H1 (cell line): ENCODE measurements at regions of chr4 and their contacts with region 1.

Region 1: GRCh38 chr4:2948895-2949765 is 14.1 kb downstream of the NOP14 start:
- DNase-seq: no peak
- H3K4me3 ChIP-seq: no peak overlapping the region
- H3K27ac ChIP-seq: no peak overlapping the region
- H3K4me1 ChIP-seq: no peaks in the 10 kb centered on the region
- H3K27me3 ChIP-seq: no peaks in the 10 kb centered on the region
- CTCF ChIP-seq: peak in 2 of 3 experiments; percentile 45 to 59; a peak in 3 of 4 replicates
- EP300 ChIP-seq: no peak
- POLR2A ChIP-seq: no peak
- RAD21 ChIP-seq: peak in 1 of 2 experiments; percentile 9; a peak in 1 of 4 replicates

Region 2: DNA sequence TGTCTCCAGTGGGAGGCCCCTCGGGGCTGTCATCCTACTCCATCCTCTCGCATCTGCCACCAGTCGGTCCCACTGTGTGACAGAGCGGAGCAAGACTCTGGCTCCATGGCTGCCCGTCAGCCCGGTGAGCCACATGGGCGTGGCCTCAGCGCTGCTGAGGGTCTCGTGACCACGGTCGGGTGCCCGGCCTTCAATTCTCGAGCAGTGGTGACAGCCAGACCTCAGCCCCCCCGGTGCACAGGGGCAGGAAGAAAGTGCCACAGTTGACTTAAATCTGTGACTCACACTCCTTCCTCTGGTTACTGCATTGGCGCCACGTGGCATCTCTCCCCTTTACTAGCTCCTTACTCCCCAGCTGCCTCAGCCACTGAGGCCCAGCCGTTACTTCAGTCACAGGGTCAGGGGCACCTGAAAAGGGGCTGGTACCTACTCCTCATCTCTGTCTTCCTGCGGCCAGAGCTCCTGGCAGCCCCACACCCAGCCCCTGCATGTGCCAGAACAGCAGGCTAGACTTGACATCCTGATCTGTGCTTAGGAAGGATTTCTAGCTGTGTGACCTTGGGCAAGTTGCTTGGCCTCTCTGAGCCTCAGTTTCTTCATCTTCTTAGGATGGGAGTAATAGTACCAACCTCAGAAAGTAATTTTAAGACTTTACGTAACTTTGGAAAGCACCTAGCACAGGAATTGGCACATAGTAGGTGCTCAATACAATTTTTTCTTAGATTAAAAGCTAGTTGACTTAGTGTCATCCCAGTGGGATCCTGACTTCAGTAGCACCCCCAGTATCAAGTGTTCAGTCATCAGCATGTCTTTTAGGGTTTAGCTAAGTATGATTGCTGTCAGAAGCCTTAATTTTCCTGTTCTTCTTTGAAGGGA is 259.1 kb before region 1 on chr4:
- CTCF ChIA-PET with region 1: no interaction called
- POLR2A ChIA-PET with region 1: no interaction called
- DNase-seq: no peak
- H3K4me3 ChIP-seq: no peak overlapping the region
- H3K27ac ChIP-seq: no peak overlapping the region
- H3K4me1 ChIP-seq: no peaks in the 10 kb centered on the region
- H3K27me3 ChIP-seq: no peaks in the 10 kb centered on the region
- CTCF ChIP-seq: no peak
- EP300 ChIP-seq: no peak
- POLR2A ChIP-seq: no peak
- RAD21 ChIP-seq: no peak

Region 3: GRCh38 chr4:2934813-2935761 is 14.0 kb before region 1 on chr4:
- CTCF ChIA-PET with region 1: interaction called, 11 read pairs
- POLR2A ChIA-PET with region 1: interaction called, 23 read pairs
- DNase-seq: peak; percentile 49 to 97
- H3K4me3 ChIP-seq: peak overlapping the region; percentile 79 to 83 (median 82)
- H3K27ac ChIP-seq: peak overlapping the region; percentile 73; the same call in 1 of the 2 replicates
- H3K4me1 ChIP-seq: peaks cover 0 to 14% (median 7%) of the 10 kb centered on the region in 4 experiments; a peak in 6 of 7 replicates
- H3K27me3 ChIP-seq: no peaks in the 10 kb centered on the region
- CTCF ChIP-seq: no peak
- EP300 ChIP-seq: no peak
- POLR2A ChIP-seq: peak in 1 of 2 experiments; percentile 91; a peak in 2 of 3 replicates
- RAD21 ChIP-seq: no peak